Thyroid gland (tissue), 4 donors: ENCODE measurements at regions of chr19 and their contacts with region 1.

Region 1: DNA sequence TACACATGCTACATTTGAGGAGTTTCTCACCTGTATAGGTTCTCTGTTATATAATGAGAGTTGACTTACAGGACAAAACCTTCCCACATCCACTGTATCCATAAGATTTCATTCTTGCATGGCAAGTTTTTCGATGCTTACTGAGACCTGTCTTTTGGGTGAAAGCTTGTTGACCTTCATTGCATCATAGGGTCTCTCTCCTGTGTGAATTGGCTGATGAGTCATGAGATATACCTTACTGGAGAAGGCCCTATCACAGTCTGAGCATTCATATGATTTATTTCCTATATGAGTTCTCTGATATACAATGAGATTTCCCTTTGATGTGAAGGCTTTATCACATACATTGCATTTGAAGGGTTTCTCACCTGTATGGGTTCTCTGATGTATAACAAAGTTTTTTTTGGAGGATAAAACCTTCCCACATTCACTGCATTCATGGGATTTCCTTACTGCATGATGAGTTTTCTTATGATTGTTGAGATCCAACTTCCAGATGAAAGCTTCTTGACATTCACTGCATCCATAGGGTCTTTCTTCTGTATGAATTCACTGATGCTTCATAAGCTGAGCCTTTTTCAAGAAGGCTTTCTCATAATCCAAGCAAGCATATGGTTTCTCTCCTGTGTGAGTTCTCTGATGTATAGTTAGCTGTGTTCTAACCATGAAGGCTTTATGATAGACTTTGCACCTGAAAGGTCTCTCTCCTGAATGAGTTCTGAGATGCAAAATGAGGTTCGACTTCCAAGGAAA is 25.7 kb downstream of the ZNF577 start:
- DNase-seq: no peak
- H3K4me3 ChIP-seq: no peak overlapping the region
- H3K27ac ChIP-seq: no peak overlapping the region
- H3K4me1 ChIP-seq: no peaks in the 10 kb centered on the region
- H3K27me3 ChIP-seq: no peaks in the 10 kb centered on the region
- CTCF ChIP-seq: no peak
- POLR2A ChIP-seq: no peak

Region 2: DNA sequence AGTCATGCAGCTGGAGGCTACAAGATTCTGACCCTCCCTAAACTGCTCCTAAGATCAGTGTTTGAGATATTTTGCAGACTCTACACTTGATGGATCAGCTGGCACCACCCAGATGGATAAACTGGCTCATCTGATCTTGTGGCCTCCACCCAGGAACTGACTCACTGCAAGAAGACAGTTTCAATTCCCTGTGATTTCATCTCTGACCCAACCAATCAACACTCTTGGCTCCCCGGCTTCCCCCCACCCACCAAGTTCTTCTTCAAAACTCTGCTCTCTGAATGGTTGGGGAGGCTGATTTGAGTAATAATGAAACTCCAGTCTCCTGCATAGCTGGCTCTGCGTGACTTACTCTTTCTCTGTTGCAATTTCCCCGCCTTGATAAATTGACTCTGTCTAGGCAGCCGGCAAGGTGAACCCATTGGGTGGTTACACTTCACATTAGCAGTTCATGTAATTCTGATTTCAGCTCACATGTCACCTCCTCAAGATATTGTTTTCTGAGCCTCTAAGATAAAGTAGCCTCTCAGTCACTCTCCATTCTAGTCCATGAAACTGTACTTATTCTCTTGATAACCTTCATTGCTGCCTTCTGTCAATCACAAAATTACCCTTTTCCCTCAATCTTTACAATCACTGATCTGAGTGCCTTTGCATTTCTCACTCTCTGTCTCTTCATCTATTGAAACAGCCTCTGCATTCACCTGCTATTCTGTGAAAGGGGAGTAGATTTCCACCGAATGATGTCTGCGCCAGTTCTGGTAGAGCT is 76.9 kb before region 1 on chr19:
- intact Hi-C with region 1: no loop called
- DNase-seq: peak in 1 of 2 donors; percentile 14
- H3K4me3 ChIP-seq: no peak overlapping the region
- H3K27ac ChIP-seq: no peak overlapping the region
- H3K4me1 ChIP-seq: no peaks in the 10 kb centered on the region
- H3K27me3 ChIP-seq: no peaks in the 10 kb centered on the region
- CTCF ChIP-seq: no peak
- POLR2A ChIP-seq: no peak

Region 3: DNA sequence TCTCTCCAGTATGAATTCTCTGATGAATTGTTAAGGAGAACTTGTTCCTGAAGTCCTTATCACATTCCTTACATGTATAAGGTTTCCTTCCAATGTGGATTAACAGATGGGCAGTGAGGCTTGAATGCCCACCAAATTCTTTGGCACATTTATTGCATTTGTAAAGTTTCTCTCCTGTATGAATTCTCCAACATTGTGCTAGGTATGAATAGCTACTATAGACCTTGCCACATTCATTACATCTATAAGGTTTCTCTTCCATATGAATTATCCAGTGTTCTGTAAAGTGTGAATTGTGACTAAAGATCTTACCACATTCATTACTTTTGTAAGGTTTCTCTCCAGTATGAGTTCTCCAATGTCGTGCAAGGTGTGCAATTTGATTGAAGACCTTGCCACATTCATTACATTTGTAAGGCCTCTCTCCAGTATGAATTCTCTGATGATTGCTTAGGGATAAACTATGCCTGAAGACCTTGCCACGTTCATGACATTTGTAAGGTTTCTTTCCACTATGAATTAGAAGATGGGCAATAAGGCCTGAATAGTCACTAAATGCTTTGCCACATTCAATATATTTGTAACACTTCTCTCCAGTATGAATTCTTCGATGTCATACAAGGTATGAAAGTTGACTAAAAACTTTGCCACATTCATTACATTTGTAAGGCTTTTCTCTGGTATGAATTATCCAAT is 611.8 kb after region 1 on chr19:
- intact Hi-C with region 1: loop called (anchors 10 kb)
- DNase-seq: no peak
- H3K4me3 ChIP-seq: no peak overlapping the region
- H3K27ac ChIP-seq: no peak overlapping the region
- H3K4me1 ChIP-seq: no peaks in the 10 kb centered on the region
- H3K27me3 ChIP-seq: no peaks in the 10 kb centered on the region
- CTCF ChIP-seq: no peak
- POLR2A ChIP-seq: no peak

Region 4: DNA sequence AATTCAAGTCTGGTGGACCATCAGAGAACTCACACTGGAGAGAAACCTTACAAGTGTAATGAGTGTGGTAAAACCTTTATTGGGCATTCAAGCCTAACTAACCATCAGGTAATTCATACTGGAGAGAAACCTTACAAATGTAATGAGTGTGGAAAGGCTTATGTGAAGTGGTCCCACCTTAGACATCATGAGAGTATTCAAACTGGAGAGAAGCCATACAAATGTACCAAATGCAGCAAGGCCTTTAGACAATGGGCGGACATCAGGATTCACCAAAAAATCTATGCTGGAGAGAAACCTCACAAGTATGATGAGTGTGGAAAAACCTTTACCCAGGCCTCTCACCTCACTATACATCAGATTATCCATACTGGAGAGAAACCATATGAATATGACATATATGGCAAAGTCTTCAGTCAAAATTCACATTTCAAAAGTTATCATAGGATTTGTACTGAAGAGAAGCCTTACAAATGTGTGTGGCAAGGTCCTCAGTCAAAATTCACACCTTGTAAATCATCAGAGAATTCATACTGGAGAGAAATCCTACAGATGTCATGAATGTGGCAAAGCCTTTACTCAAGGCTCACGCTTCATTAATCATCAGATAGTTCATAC is 1350.8 kb after region 1 on chr19:
- intact Hi-C with region 1: loop called (anchors 5 kb)
- DNase-seq: no peak
- H3K4me3 ChIP-seq: no peak overlapping the region
- H3K27ac ChIP-seq: no peak overlapping the region
- H3K4me1 ChIP-seq: no peaks in the 10 kb centered on the region
- H3K27me3 ChIP-seq: no peaks in the 10 kb centered on the region
- CTCF ChIP-seq: no peak
- POLR2A ChIP-seq: no peak